MCF 10A (cell line): ENCODE measurements at regions of chr16 and their contacts with region 1.

Region 1: DNA sequence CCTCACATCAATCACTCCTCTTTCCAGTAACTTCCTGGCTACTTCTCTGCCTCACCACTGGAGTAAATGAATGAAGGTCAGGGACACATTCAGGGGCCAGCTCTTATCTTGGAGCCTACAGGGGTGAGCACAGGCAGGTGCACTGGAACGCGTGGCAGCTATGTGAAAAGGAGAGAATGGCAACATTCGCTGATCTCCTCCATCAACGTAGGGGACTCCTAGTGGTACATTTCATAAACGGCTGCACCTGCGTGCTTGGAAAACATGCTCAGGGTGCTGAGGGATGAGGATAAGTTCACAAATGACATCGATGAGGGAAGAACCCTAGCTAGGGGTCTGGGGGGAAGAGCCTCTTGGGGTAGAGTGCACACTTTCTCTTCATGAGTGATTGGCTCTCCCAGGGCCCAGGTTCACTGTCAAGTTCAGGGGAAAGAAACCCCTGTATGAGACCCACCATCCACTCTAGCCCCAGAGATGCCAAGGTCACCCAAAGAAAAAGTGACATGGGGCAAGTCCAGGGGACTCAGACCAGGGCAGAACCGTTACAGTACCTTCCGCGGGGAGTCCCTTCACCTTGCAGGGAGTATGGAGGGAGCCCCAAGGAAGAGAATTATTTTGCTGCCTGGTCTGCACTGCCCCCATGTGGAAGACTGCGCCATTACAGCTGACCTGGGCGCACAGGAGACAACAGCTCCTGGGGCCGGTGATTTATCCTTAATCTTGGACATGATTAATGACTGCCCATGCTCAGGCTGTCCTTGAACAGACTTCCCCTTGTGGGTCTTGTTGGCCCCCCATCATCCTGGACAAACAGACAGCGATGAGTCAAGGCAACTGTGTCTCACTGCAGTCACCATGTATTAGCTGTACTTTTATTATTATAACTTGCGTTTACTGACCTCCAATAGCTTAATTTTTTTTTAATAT is 30.1 kb downstream of the VAC14 start:
- DNase-seq: peak; percentile 76
- H3K4me3 Mint-ChIP-seq: no peak overlapping the region
- H3K27ac Mint-ChIP-seq: no peak overlapping the region
- H3K4me1 Mint-ChIP-seq: peaks cover 12% of the 10 kb centered on the region
- H3K27me3 Mint-ChIP-seq: no peaks in the 10 kb centered on the region
- CTCF ChIP-seq: peak; percentile 96

Region 2: DNA sequence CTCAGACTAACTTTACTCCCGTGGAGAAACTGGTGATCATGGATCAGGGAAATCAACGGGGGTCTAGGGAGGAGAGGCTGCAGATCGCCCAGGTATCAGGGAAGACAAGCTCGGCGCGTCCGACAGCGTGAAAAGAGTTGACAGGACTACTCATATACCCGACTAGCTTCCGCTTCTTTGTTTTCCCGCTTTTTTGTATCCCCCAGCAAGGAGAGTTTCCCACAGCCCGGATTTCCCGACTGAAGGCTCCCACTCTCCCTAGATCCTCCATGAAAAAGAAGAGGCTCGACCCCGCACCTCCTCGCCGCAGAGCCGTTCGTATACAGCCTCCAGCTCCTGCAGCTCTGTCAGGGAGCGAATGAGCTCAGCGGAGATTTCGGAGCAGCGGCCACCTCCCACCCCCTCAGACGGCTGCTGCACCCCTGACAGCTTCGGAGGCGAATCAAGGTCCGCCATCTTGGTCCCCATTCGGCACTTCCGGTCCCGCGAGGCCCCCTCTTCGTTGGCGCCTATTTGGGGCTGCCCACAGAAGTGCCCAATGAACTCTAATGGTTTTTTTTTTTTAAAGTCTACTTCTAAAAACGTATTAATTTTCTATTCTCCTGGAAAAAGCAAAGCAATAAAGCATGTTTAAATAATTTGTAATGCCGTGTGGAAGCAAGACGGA is 247.7 kb before region 1 on chr16 and contains the start of gene COG4:
- CTCF ChIA-PET with region 1: interaction called, 4 read pairs
- POLR2A ChIA-PET with region 1: no interaction called
- intact Hi-C with region 1: loop called (anchors 10 kb)
- DNase-seq: peak; percentile 87
- H3K4me3 Mint-ChIP-seq: peak within 1 kb of the TSS; percentile 98
- H3K27ac Mint-ChIP-seq: peak within 1 kb of the TSS; percentile 97
- H3K4me1 Mint-ChIP-seq: peaks cover 20% of the 10 kb centered on the region
- H3K27me3 Mint-ChIP-seq: no peaks in the 10 kb centered on the region
- CTCF ChIP-seq: no peak
- total RNA-seq, gene COG4: 62.2 and 64.9 TPM in 2 replicates

Region 3: DNA sequence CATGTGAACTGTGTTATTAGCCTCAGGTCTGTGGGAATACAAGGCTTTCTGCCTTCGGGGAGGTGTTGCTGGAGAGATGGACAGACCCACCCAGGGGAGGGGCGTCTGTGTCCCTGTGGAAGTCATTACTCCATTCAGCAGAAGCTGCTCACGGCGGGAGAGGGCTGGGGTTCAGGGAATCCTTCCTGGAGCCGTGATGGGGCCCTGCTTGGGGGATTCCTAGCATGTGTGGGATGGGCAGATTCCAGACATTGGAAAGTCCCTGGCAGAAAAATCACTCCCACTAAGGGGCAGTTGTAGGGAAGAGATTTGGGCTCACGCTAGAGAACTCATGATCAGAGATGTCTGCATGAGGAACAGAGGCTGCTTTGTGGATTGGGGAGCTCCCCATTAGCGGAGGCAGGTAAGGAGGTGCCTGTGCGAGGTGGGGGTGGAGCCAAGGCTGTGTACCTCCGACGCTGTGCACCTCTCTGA is 180.9 kb before region 1 on chr16:
- CTCF ChIA-PET with region 1: no interaction called
- POLR2A ChIA-PET with region 1: no interaction called
- intact Hi-C with region 1: no loop called
- DNase-seq: no peak
- H3K4me3 Mint-ChIP-seq: peak overlapping the region; percentile 19
- H3K27ac Mint-ChIP-seq: peak overlapping the region; percentile 63
- H3K4me1 Mint-ChIP-seq: peaks cover 20% of the 10 kb centered on the region
- H3K27me3 Mint-ChIP-seq: no peaks in the 10 kb centered on the region
- CTCF ChIP-seq: no peak

Region 4: DNA sequence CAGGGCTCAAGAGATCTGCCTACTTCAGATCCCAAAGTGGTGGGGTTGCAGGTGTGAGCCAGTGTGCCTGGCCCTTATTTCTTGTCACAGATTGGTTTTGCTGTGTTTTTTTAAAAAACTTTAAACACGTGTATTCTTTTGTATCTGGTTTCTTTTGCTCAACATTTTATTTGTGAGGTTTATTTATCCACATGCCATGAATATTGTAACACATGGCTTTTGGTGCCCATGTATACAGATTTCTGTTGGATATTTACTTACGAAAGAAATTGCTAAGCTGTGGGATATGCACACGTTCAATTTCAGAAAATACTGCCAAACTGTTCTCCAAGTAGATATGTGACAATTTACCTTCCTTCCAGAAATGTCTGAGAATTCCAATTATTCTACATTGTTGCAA is 143.2 kb before region 1 on chr16:
- CTCF ChIA-PET with region 1: no interaction called
- POLR2A ChIA-PET with region 1: no interaction called
- intact Hi-C with region 1: no loop called
- DNase-seq: no peak
- H3K4me3 Mint-ChIP-seq: no peak overlapping the region
- H3K27ac Mint-ChIP-seq: no peak overlapping the region
- H3K4me1 Mint-ChIP-seq: no peaks in the 10 kb centered on the region
- H3K27me3 Mint-ChIP-seq: peaks cover 18% of the 10 kb centered on the region
- CTCF ChIP-seq: no peak

Region 5: DNA sequence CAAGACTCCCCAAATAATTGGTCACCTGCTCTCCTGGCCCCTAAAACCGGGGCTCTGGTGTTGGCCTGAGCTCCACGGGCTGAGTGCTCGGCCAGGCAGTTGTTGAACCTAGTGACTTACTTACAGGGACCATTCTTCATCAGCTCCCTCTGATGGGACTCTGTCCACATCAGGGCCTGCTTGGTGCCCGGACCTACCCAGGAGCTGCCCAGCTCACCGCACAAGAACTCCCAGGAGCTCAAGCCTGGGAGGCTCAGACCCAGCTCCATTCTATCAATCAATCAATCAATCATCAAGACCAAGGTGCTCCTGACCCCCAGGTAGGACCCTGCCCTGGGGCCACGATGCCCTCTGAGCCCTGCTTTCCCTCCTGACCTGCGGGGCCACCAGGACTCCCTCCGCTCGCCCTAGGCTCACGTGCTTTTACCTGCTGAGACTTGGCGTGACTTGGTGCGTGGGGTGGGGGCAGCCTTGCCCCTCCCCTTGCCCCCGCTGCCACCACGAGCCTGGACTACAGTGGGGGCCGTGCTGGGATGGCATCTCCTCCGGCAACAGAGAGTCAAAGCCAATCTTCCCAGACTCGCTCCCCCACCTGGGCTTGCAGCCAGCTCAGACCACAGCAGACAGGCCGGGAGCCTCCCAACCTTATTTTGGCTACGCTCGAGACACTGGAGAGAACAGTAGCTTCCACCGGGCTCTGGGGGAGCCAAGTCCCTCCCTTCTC is 108.8 kb before region 1 on chr16:
- CTCF ChIA-PET with region 1: interaction called, 18 read pairs
- POLR2A ChIA-PET with region 1: no interaction called
- intact Hi-C with region 1: no loop called
- DNase-seq: no peak
- H3K4me3 Mint-ChIP-seq: no peak overlapping the region
- H3K27ac Mint-ChIP-seq: no peak overlapping the region
- H3K4me1 Mint-ChIP-seq: no peaks in the 10 kb centered on the region
- H3K27me3 Mint-ChIP-seq: no peaks in the 10 kb centered on the region
- CTCF ChIP-seq: no peak

Region 6: DNA sequence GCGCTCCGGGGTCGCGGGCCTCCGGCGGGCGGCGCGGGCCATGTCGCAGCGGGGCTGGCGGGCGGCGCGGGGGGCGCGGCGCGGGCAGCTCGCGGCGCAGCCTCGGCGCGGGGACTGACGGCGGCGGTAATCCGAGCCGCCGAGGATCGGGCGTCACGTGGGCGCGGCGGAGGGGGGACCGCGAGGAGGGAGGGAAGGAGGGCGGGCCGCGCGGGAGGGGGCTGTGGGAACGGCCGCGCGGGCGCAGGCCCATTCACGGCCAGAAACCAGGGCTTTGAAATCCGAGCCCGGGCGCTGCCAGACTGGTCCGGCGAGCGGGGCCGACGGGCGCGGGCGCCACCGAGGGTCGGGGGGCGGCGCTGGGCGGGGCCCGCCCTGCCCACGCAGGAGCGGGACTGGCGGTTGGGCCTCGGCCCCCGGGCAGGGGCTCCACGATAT is 84.9 kb before region 1 on chr16 and contains the start of gene MTSS2:
- CTCF ChIA-PET with region 1: interaction called, 121 read pairs
- POLR2A ChIA-PET with region 1: interaction called, 12 read pairs
- intact Hi-C with region 1: loop called (anchors 2 kb)
- DNase-seq: peak; percentile 77
- H3K4me3 Mint-ChIP-seq: peak within 1 kb of the TSS; percentile 76
- H3K27ac Mint-ChIP-seq: peak within 1 kb of the TSS; percentile 75
- H3K4me1 Mint-ChIP-seq: peaks cover 37% of the 10 kb centered on the region
- H3K27me3 Mint-ChIP-seq: no peaks in the 10 kb centered on the region
- CTCF ChIP-seq: no peak
- total RNA-seq, gene MTSS2: 75.8 and 78.7 TPM in 2 replicates

Region 7: GRCh38 chr16:70715055-70715858 is 55.6 kb before region 1 on chr16:
- CTCF ChIA-PET with region 1: interaction called, 26 read pairs
- POLR2A ChIA-PET with region 1: interaction called, 6 read pairs
- intact Hi-C with region 1: loop called (anchors 1 kb)
- DNase-seq: peak; percentile 99
- H3K4me3 Mint-ChIP-seq: peak overlapping the region; percentile 60
- H3K27ac Mint-ChIP-seq: peak overlapping the region; percentile 96
- H3K4me1 Mint-ChIP-seq: peaks cover 34% of the 10 kb centered on the region
- H3K27me3 Mint-ChIP-seq: no peaks in the 10 kb centered on the region
- CTCF ChIP-seq: no peak

Region 8: DNA sequence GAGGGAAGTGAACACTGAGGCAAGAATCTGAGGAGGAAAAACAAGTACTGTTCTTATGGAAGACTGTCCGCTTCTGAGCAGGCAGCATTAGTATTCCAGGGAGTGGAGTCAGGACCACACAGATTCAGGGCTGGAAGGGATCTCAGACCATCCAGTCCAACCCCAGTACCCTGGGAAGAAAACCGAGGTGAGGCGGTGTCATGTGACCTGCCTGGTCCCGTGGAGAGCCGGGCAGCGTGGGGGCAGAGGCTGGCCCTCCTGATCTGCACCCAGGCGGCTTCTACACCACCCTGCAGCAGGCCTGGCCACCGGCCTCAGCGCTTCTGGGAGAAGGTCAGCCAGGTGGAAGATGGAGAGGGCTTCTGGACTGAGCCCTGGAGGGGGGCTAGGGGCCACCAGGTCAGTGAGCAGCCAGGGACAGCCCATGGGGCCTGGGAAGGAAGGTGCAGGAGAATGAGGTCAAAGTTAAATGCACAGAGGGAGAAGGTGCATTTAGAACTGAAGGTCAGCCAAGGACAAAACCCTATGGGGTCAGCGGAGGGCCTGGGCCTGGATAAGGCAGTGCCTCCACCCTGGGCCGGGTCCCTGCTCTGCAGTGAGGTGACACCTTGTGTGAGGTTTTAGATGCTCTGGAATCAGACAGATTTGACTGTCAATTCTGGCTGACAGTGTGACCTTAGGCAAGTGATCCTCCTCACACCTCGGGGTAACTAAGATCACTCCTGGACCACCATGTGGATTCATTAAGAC is 15.9 kb before region 1 on chr16:
- CTCF ChIA-PET with region 1: interaction called, 70 read pairs
- POLR2A ChIA-PET with region 1: no interaction called
- intact Hi-C with region 1: no loop called
- DNase-seq: no peak
- H3K4me3 Mint-ChIP-seq: no peak overlapping the region
- H3K27ac Mint-ChIP-seq: no peak overlapping the region
- H3K4me1 Mint-ChIP-seq: peaks cover 9% of the 10 kb centered on the region
- H3K27me3 Mint-ChIP-seq: no peaks in the 10 kb centered on the region
- CTCF ChIP-seq: no peak